ENCODE measurements at regions of chr7 and their contacts with region 1.

Region 1: DNA sequence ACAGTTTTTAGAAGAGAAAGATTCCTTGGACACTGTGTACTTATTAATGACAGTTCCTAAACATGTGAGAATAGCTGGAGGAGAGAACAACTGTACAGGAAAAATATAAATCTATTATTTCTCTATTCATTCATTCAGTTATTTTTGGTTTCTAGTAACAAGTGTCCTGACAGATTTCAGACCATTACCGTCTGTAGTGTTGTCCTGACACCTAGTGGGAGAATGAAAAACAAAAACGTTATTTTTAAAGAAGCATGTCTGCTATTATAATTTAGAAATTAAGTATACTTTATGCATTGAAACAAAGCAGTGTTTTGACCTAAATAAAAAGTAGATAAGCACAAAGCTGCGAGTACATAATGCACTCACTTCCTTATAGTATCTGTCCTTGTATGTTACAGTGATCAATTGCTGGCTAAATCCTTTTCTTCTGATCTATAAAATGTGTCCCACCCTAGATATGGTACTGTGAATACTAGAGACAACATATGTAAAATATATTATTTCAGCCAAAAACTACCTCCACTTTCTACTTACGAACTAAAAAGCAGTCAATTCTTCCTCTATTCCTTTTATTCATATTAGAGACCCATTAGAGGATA is 575.6 kb downstream of the ARL4A start:
- DNase-seq: no peak
- H3K4me3 ChIP-seq: no peak overlapping the region
- H3K27ac ChIP-seq: no peak overlapping the region
- H3K4me1 ChIP-seq: no peaks in the 10 kb centered on the region
- H3K27me3 ChIP-seq: no peaks in the 10 kb centered on the region
- CTCF ChIP-seq: peak in 2 of 3 experiments; percentile 34 to 61
- POLR2A ChIP-seq: no peak

Region 2: DNA sequence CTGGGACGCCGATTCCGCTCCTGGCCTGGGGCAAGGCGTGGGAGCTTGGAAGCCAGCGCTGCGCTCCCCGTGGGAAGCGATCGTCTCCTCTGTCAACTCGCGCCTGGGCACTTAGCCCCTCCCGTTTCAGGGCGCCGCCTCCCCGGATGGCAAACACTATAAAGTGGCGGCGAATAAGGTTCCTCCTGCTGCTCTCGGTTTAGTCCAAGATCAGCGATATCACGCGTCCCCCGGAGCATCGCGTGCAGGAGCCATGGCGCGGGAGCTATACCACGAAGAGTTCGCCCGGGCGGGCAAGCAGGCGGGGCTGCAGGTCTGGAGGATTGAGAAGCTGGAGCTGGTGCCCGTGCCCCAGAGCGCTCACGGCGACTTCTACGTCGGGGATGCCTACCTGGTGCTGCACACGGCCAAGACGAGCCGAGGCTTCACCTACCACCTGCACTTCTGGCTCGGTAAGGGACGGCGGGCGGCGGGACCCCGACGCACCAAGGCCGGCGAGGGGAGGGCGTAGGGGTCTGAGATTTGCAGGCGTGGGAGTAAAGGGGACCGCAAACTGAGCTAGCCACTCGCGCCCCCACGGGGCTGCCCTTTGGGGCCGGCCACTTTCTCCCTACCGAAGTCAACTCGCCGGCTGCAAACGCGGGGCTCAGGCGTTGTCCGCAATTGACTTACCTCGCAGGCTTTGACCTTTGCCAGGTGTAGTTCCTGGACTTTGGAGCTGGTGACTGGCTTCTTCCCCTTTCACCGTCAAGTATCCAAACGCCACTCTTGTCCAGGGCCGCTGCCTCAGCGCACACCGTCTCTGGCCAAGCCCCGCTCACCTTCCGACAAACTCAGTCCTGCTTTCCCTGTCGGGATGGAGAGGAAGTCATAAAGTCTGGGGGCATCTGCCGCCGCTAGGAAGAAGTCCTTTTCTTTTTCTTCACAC is 692.2 kb before region 1 on chr7 and contains the start of gene SCIN:
- intact Hi-C with region 1: no loop called
- DNase-seq: no peak
- H3K4me3 ChIP-seq: peak within 1 kb of the TSS; percentile 37 to 41
- H3K27ac ChIP-seq: no peak within 1 kb of the TSS
- H3K4me1 ChIP-seq: peaks cover 16% of the 10 kb centered on the region
- H3K27me3 ChIP-seq: no peaks in the 10 kb centered on the region
- CTCF ChIP-seq: no peak
- POLR2A ChIP-seq: no peak
- total RNA-seq, gene SCIN: 0.74 TPM

Region 3: DNA sequence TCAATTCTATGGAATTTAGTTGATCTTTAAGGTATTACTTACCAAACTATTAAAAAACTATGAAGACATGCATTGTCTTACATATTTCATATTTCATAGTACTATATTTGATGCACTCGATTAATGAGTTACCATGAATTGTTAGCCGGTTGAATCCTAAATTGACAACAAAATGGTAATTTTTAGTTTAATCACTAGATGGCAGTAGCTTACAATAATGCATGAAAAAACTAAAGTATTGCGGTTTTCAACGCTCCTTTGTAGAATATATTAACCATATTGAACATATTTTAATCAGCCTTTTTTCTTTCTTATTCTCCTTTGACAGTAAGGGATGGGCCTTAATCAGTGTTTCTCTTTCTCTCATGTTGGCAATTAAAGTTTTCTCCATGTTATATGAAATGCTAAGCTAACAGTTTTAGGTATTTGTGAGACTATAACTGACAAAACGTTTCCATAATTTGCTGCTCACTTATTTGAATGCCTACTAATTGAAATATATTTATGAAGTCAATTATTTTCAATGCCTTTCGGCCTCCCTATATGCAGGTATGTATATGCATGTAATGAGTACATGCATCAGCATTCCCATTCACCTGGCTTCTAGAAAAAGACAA is 624.1 kb before region 1 on chr7:
- intact Hi-C with region 1: loop called (anchors 10 kb)
- DNase-seq: no peak
- H3K4me3 ChIP-seq: no peak overlapping the region
- H3K27ac ChIP-seq: no peak overlapping the region
- H3K4me1 ChIP-seq: no peaks in the 10 kb centered on the region
- H3K27me3 ChIP-seq: no peaks in the 10 kb centered on the region
- CTCF ChIP-seq: peak in 2 of 3 experiments; percentile 28 to 47
- POLR2A ChIP-seq: no peak

Measured in vagina (tissue), 2 donors.